Heart right ventricle (tissue), 16 donors: ENCODE measurements at regions of chr6 and their contacts with region 1.

Region 1: DNA sequence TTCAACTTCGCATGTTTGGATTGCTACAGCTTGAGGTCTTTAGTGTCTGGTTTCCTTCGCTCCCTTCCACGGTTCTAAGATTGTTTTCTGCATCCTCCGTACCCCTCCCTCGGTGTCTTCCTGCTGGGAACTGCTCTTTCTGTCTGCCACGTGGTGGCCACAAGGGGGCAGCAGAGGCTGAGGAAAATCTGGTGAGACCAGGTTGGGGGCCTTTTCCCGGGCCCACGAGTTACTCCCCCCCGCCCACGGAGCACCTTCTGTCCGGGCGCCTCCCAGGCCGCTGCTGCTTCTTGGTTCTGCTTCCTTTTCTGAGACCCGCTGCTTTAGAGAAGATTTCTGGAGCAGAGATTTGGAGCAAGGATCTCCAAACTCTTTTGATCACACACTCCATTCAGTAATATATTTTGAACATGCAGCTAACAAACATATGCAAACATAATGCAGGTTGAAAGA is 21.1 kb upstream of the NOTCH4 start:
- DNase-seq: peak; percentile 86 to 89
- ATAC-seq: peak; percentile 90 to 96 (median 93)
- H3K4me3 ChIP-seq: peak overlapping the region in 5 of 10 donors; percentile 13 to 31 (median 20)
- H3K27ac ChIP-seq: peak overlapping the region; percentile 29 to 89 (median 70)
- H3K4me1 ChIP-seq: peaks cover 4 to 20% (median 9%) of the 10 kb centered on the region in 9 donors
- H3K27me3 ChIP-seq: no peaks in the 10 kb centered on the region
- CTCF ChIP-seq: peak; percentile 90 to 96 (median 92)

Region 2: GRCh38 chr6:32113386-32114352 is 131.3 kb before region 1 on chr6:
- intact Hi-C with region 1: loop called in 2 of 10 experiments (anchors 5 to 10 kb)
- DNase-seq: peak; percentile 85 to 89
- ATAC-seq: peak; percentile 52 to 78 (median 69)
- H3K4me3 ChIP-seq: no peak overlapping the region
- H3K27ac ChIP-seq: peak overlapping the region; percentile 26 to 96 (median 86)
- H3K4me1 ChIP-seq: peaks cover 19 to 70% (median 51%) of the 10 kb centered on the region in 9 donors
- H3K27me3 ChIP-seq: peaks cover 0 to 7% (median 0%) of the 10 kb centered on the region in 7 donors
- CTCF ChIP-seq: peak in 7 of 9 donors; percentile 21 to 60 (median 43)

Region 3: GRCh38 chr6:32195652-32195901 is 49.4 kb before region 1 on chr6:
- intact Hi-C with region 1: loop called in 2 of 10 experiments (anchors 5 kb)
- DNase-seq: peak; percentile 100
- ATAC-seq: peak in 6 of 8 donors; percentile 85 to 95 (median 86)
- H3K4me3 ChIP-seq: peak overlapping the region in 7 of 10 donors; percentile 65 to 79 (median 75)
- H3K27ac ChIP-seq: peak overlapping the region; percentile 98 to 100 (median 99)
- H3K4me1 ChIP-seq: peaks cover 11 to 68% (median 52%) of the 10 kb centered on the region in 9 donors
- H3K27me3 ChIP-seq: no peaks in the 10 kb centered on the region
- CTCF ChIP-seq: peak; percentile 45 to 82 (median 64)

Region 4: DNA sequence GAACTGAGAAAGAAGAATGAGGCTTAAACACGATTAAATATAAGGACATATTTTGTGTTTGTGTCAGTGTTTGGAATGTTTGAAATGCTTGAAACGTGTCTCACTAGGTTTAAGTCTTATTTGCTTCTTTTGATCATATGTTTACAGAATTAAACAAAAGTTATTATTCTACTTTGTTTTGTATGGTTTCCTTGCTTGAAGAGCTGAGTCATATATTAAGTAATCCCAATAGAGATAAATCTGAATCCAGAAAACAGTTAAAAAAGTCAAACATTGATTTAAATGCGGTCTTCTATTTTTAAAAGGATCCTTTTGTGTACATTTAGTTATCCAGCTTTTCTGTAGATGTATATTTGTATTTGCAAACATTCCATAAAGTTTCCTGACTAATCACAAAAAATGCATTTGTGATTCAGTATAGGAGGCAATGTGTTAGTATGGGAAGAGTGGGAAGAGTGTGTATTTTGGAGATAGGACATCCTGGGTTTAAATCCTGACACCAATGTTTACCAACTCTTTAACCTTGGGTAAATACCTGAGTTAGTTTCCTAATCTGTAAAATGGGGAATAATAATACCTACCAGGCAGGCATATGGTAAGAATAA is 53.8 kb after region 1 on chr6:
- intact Hi-C with region 1: no loop called
- DNase-seq: no peak
- ATAC-seq: no peak
- H3K4me3 ChIP-seq: no peak overlapping the region
- H3K27ac ChIP-seq: no peak overlapping the region
- H3K4me1 ChIP-seq: no peaks in the 10 kb centered on the region
- H3K27me3 ChIP-seq: peaks cover 0 to 12% (median 0%) of the 10 kb centered on the region in 7 donors
- CTCF ChIP-seq: no peak

Region 5: DNA sequence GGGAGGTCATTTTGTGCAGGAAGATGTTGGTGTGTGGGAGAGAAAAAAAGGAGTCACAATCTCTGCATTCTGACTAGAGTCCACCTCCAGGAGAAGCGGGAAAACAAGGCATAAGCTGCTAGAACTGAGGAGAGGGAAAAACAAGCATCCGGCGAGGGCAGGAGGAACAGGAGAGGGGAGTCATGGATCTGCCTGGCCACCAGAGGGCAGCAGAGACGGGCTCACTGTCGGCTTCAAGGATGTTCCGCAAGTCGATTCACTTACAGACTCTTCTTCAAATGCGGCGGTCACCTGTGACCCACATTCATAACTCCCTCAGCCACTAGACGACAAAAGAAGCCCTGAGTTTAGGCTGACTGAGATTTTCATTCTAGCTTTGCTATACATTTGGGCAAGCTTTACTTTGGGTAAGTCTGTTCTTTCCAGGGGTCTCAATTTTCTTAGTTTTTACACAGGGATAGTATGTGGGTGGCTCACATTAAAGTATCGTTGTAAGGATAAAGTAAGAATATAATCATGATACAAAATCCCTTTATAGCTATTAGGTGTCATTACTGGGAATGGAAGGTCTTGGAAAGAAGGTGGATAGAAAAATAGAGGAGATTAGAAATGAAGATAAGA is 168.6 kb after region 1 on chr6:
- intact Hi-C with region 1: loop called in 6 of 10 experiments (anchors 2 to 10 kb)
- DNase-seq: peak; percentile 72 to 84
- ATAC-seq: peak; percentile 57 to 90 (median 81)
- H3K4me3 ChIP-seq: no peak overlapping the region
- H3K27ac ChIP-seq: no peak overlapping the region
- H3K4me1 ChIP-seq: peaks cover 0 to 12% (median 4%) of the 10 kb centered on the region in 9 donors
- H3K27me3 ChIP-seq: peaks cover 0 to 74% (median 54%) of the 10 kb centered on the region in 7 donors
- CTCF ChIP-seq: peak; percentile 85 to 98 (median 96)

Region 6: GRCh38 chr6:32796848-32797776 is 552.1 kb after region 1 on chr6:
- intact Hi-C with region 1: loop called in 6 of 10 experiments (anchors 5 to 10 kb)
- DNase-seq: peak; percentile 73 to 78
- ATAC-seq: peak; percentile 71 to 90 (median 76)
- H3K4me3 ChIP-seq: peak overlapping the region in 4 of 10 donors; percentile 18 to 30 (median 26)
- H3K27ac ChIP-seq: peak overlapping the region in 1 of 10 donors; percentile 7
- H3K4me1 ChIP-seq: peaks cover 0 to 38% (median 3%) of the 10 kb centered on the region in 9 donors
- H3K27me3 ChIP-seq: peaks cover 0 to 91% (median 41%) of the 10 kb centered on the region in 7 donors
- CTCF ChIP-seq: peak; percentile 74 to 90 (median 86)